RWPE1 (cell line): ENCODE measurements at regions of chr9 and their contacts with region 1.

Region 1: DNA sequence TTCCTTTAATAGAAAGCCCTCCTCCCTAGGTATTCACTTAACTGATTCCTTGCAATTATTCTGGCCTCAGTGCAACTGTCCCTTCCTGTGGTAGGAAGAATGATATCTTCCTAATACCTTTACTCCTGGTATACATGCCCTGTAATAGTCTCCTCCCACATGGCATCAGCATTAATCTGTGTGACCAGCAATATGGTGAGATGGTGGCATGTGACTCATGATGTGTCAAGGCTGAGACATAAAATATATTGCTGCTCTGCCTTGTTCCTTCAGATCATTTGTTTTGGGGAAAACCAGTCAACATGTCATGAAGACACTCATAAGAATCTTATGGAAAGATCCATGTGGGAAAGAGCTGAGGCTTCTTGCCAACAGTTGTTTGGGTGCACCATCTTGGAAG is 149.1 kb upstream of the TRPM3 start:
- DNase-seq: no peak
- H3K27ac ChIP-seq: no peak overlapping the region
- CTCF ChIP-seq: no peak

Region 2: DNA sequence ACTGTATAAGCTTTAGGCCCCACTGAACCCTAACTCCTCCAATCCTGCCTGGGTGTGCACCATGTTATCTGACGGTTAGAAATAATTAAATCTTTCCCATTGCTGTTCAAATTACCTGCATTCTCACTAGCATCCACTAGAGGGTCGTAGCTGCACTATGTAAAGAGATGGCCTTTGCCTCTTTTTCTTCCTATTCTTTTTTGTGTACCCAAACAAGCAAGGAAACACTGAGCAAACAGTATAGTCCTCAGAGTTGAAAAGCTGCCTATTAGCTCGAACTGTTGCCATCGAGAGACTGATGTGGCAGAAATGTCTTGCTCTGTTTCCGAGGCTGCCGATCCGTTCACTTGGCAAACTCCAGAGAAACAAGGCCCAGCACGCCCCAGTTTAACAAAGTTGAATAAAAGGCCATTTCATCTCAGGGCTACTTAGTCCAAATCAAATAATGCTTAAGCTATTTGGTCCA is 14.7 kb after region 1 on chr9:
- CTCF ChIA-PET with region 1: interaction called, 13 read pairs
- POLR2A ChIA-PET with region 1: no interaction called
- DNase-seq: peak; percentile 54
- H3K27ac ChIP-seq: no peak overlapping the region
- CTCF ChIP-seq: peak; percentile 90